ENCODE measurements at regions of chr3 and their contacts with region 1.

Region 1: GRCh38 chr3:30693470-30694120 is 87.2 kb downstream of the TGFBR2 start:
- DNase-seq: peak; percentile 83
- H3K4me3 ChIP-seq: no peak overlapping the region
- H3K27ac ChIP-seq: no peak overlapping the region
- H3K4me1 ChIP-seq: peaks cover 7% of the 10 kb centered on the region
- CTCF ChIP-seq: peak; percentile 95

Region 2: GRCh38 chr3:30112902-30113484 is 580.6 kb before region 1 on chr3:
- CTCF ChIA-PET with region 1: no interaction called
- POLR2A ChIA-PET with region 1: no interaction called
- intact Hi-C with region 1: loop called (anchors 2 kb)
- DNase-seq: peak; percentile 45
- H3K4me3 ChIP-seq: no peak overlapping the region
- H3K27ac ChIP-seq: no peak overlapping the region
- H3K4me1 ChIP-seq: no peaks in the 10 kb centered on the region
- CTCF ChIP-seq: peak; percentile 80

Region 3: GRCh38 chr3:30319713-30320112 is 373.9 kb before region 1 on chr3:
- CTCF ChIA-PET with region 1: no interaction called
- POLR2A ChIA-PET with region 1: no interaction called
- intact Hi-C with region 1: loop called (anchors 10 kb)
- DNase-seq: peak; percentile 52
- H3K4me3 ChIP-seq: no peak overlapping the region
- H3K27ac ChIP-seq: no peak overlapping the region
- H3K4me1 ChIP-seq: no peaks in the 10 kb centered on the region
- CTCF ChIP-seq: peak; percentile 68

Region 4: GRCh38 chr3:30524357-30525040 is 169.1 kb before region 1 on chr3:
- CTCF ChIA-PET with region 1: no interaction called
- POLR2A ChIA-PET with region 1: no interaction called
- intact Hi-C with region 1: loop called (anchors 5 kb)
- DNase-seq: no peak
- H3K4me3 ChIP-seq: no peak overlapping the region
- H3K27ac ChIP-seq: no peak overlapping the region
- H3K4me1 ChIP-seq: no peaks in the 10 kb centered on the region
- CTCF ChIP-seq: no peak

Region 5: GRCh38 chr3:30628901-30629590 is 64.5 kb before region 1 on chr3:
- CTCF ChIA-PET with region 1: no interaction called
- POLR2A ChIA-PET with region 1: no interaction called
- intact Hi-C with region 1: loop called (anchors 1 kb)
- DNase-seq: peak; percentile 75
- H3K4me3 ChIP-seq: peak overlapping the region; percentile 37
- H3K27ac ChIP-seq: peak overlapping the region; percentile 81
- H3K4me1 ChIP-seq: peaks cover 99% of the 10 kb centered on the region
- CTCF ChIP-seq: peak; percentile 81

Measured in OCI-LY7 (cell line).